Activated CD8-positive, alpha-beta memory T cell treated with anti-CD3 and anti-CD28 coated beads, Interleukin-2, amount 10 ng/mL, durations not matched to agents 7 days and 5 days (primary cell): ENCODE measurements at regions of chr10 and their contacts with region 1.

Region 1: DNA sequence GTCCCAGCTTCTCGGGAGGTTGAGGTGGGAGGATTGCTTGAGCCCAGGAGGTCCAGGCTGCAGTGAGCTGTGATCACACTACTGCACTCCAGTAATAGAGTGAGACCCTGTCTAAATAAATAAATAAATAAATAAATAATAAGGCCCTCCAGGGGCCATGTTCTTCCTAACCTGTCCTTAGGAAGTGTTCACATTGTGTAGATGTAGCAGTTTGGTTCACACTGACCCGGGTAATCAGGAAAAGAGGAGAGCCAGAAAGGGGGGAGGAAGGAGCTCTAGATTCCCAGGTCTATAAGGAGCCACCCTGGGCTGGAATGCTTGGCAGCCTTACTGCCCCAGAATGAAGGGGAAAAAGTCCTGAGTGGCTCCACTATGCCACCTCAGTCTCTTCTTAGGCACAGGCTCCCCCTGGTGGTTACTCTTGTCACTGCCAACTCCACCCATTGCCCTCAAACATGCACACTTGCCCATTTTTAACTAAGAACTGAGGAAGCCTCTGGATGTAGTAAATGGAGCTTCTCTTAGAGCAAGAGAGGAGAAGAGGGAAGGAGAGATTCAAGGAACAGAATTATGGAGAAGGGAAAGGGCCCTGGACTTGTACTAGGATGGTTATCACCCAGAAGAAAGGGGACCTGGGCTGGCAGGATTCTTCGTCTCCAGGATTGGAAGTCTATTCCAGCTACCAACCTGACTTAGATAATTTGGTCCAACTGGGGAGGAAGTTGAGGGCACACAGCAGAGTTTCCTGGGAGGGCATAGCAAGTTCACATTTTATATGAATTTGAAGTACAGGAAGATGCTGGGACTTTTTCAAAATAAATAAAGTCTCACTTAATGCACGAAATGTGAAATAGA is 7.8 kb downstream of the HPS6 start:
- DNase-seq: peak; percentile 86
- ATAC-seq: peak; percentile 94
- H3K4me3 Mint-ChIP-seq: no peak overlapping the region
- H3K27ac Mint-ChIP-seq: no peak overlapping the region
- H3K4me1 Mint-ChIP-seq: no peaks in the 10 kb centered on the region
- H3K27me3 Mint-ChIP-seq: no peaks in the 10 kb centered on the region

Region 2: GRCh38 chr10:101889256-101890210 is 183.4 kb before region 1 on chr10:
- CTCF ChIA-PET with region 1: interaction called, 37 read pairs
- DNase-seq: peak; percentile 85
- ATAC-seq: peak; percentile 70
- H3K4me3 Mint-ChIP-seq: no peak overlapping the region
- H3K27ac Mint-ChIP-seq: no peak overlapping the region
- H3K4me1 Mint-ChIP-seq: peaks cover 14% of the 10 kb centered on the region
- H3K27me3 Mint-ChIP-seq: no peaks in the 10 kb centered on the region

Region 3: DNA sequence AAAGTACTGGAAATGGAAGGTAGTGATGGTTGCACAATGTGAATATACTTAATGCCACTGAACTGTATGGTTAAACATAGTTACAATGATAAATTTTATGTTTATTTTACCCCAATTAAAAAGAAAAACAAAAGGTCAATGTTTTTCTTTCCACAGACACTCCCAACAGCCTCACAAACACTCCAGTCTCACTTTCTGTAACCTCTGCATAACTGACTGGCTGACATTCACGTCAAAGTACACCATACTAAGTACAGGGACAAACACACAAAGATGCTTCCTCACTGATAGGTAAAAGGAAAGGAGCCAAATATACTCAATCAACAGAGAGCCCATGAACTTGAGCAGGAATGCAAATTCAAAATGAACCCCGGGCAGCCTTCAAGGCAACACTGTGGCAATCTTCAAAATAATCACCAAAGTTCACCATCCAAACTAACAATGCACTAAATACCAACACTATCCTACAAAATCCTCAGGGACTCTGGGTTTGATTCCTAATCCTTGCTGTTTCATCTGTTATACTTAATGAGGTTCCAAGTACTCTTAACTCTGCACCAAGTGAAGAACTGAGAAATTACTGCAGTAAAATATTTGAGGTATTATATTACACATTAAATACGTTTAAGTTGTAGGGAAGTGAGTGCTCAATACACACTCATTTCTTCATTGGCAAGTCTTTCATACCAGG is 107.7 kb before region 1 on chr10:
- CTCF ChIA-PET with region 1: no interaction called
- DNase-seq: no peak
- ATAC-seq: no peak
- H3K4me3 Mint-ChIP-seq: no peak overlapping the region
- H3K27ac Mint-ChIP-seq: no peak overlapping the region
- H3K4me1 Mint-ChIP-seq: peaks cover 19% of the 10 kb centered on the region
- H3K27me3 Mint-ChIP-seq: no peaks in the 10 kb centered on the region

Region 4: GRCh38 chr10:102055647-102056419 is 17.1 kb before region 1 on chr10 and contains the start of gene ARMH3:
- CTCF ChIA-PET with region 1: interaction called, 20 read pairs
- DNase-seq: peak; percentile 96
- ATAC-seq: peak; percentile 95
- H3K4me3 Mint-ChIP-seq: peak within 1 kb of the TSS; percentile 95
- H3K27ac Mint-ChIP-seq: peak within 1 kb of the TSS; percentile 93
- H3K4me1 Mint-ChIP-seq: peaks cover 40% of the 10 kb centered on the region
- H3K27me3 Mint-ChIP-seq: no peaks in the 10 kb centered on the region
- total RNA-seq, gene ARMH3: 23.8 to 25.9 TPM

Region 5: GRCh38 chr10:102085336-102085735 is 12.4 kb after region 1 on chr10:
- CTCF ChIA-PET with region 1: interaction called, 27 read pairs
- DNase-seq: no peak
- ATAC-seq: no peak
- H3K4me3 Mint-ChIP-seq: no peak overlapping the region
- H3K27ac Mint-ChIP-seq: no peak overlapping the region
- H3K4me1 Mint-ChIP-seq: no peaks in the 10 kb centered on the region
- H3K27me3 Mint-ChIP-seq: no peaks in the 10 kb centered on the region